GM10248 (cell line): ENCODE measurements at regions of chr7 and their contacts with region 1.

Region 1: DNA sequence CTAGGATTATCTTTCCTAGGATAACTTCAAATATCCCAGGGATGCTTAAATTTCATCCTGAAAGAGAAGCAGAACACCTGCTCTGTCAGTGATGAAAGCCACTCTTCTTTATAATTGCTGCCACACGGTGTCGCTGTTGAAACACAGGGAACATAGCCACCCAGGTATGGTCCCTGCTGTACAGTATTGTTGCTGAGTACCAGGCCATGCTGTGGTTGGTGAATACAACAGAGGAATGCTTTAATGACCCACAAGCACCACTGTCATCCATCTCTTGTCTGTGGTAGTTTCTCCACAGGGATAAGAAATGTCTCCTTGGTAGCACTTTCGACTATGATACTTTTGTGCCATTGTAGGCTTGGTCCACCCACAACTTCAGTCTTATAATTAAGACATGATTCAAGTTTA is 70.6 kb upstream of the STARD3NL start:
- DNase-seq: peak; percentile 55
- CTCF ChIP-seq: peak; percentile 73

Region 2: DNA sequence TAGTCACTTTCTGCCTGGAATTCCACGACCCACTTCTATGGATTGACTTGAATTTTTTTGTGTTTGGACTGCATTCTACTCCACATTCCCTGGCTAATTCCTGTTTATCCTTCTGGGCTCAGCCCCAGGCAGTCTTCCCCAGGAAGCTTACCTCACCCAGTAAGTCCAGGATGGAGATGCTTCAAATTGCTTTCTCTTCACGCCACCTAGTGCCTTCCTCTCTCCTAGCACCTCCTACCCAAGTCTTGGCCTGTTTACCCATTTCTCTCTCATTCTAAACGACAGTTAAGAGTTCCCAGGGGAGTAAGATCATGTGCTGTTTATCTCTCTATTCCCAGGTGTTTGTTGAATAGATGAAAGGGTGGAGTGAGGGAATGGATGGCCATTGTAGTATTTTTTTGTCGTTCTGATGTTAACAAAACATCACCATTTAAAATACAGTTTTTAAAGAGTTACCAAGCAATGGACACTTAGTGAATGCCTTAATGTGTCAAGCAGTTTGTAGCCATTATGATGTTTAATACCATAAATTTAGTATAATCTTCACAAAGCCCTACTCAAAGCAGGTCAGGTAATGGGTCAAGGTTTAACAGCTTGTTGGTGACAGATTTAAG is 211.4 kb after region 1 on chr7:
- CTCF ChIA-PET with region 1: interaction called, 15 read pairs
- POLR2A ChIA-PET with region 1: no interaction called
- DNase-seq: peak; percentile 68
- CTCF ChIP-seq: peak; percentile 61